ENCODE measurements at regions of chr11 and their contacts with region 1.

Region 1: DNA sequence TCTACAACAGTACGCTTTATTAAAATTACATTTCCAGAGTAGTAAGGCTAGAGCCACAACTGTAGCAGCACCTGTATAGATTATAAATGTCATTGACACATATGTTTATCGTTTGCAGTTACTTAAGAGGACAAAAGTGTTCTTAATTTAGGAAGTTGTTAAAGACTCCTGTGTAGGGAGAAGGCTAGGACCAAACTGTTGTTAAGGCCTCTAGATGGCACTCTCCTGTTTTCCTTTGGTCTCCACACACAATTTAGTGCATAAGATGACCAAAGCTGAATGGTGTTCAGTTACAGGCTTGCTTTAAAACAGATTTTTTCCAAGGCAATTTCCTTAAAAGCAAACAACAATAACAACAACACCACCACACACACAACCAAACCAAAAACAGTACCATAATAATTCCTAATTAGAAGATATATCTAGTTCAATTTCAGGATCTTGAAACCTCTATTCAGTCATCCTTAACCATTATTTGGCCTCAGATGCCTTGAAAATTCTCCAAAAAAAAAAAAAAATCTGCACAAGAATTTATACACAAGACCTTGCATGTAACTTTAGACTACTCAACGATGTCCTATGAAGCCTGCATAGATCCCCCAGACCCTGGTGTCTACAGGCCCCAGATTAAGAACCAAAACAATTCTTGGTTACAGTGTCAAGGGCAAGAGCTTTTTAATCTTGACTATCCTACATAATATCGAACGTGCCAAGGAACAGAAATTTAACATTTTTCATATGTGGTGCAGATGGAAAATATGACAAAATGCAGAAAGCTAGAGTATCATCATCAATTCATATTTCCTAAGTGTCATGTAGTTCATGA is 42.6 kb upstream of the APOA1 start:
- DNase-seq: peak; percentile 39 to 70 (median 60)
- H3K4me3 ChIP-seq: no peak overlapping the region
- H3K4me3 Mint-ChIP-seq: no peak overlapping the region
- H3K27ac ChIP-seq: peak overlapping the region in 1 of 2 donors; percentile 24
- H3K27ac Mint-ChIP-seq: peak overlapping the region in 5 of 7 donors; percentile 2 to 66 (median 32)
- H3K4me1 ChIP-seq: no peaks in the 10 kb centered on the region
- H3K4me1 Mint-ChIP-seq: peaks cover 5% of the 10 kb centered on the region
- H3K27me3 ChIP-seq: no peaks in the 10 kb centered on the region
- H3K27me3 Mint-ChIP-seq: no peaks in the 10 kb centered on the region
- CTCF ChIP-seq: peak; percentile 68

Region 2: GRCh38 chr11:117107701-117108590 is 227.9 kb after region 1 on chr11:
- intact Hi-C with region 1: loop called (anchors 1 to 2 kb)
- DNase-seq: no peak
- H3K4me3 ChIP-seq: no peak overlapping the region
- H3K4me3 Mint-ChIP-seq: no peak overlapping the region
- H3K27ac ChIP-seq: no peak overlapping the region
- H3K27ac Mint-ChIP-seq: no peak overlapping the region
- H3K4me1 ChIP-seq: no peaks in the 10 kb centered on the region
- H3K4me1 Mint-ChIP-seq: no peaks in the 10 kb centered on the region
- H3K27me3 ChIP-seq: no peaks in the 10 kb centered on the region
- H3K27me3 Mint-ChIP-seq: peaks cover 0 to 2% (median 2%) of the 10 kb centered on the region in 3 donors
- CTCF ChIP-seq: no peak

Region 3: DNA sequence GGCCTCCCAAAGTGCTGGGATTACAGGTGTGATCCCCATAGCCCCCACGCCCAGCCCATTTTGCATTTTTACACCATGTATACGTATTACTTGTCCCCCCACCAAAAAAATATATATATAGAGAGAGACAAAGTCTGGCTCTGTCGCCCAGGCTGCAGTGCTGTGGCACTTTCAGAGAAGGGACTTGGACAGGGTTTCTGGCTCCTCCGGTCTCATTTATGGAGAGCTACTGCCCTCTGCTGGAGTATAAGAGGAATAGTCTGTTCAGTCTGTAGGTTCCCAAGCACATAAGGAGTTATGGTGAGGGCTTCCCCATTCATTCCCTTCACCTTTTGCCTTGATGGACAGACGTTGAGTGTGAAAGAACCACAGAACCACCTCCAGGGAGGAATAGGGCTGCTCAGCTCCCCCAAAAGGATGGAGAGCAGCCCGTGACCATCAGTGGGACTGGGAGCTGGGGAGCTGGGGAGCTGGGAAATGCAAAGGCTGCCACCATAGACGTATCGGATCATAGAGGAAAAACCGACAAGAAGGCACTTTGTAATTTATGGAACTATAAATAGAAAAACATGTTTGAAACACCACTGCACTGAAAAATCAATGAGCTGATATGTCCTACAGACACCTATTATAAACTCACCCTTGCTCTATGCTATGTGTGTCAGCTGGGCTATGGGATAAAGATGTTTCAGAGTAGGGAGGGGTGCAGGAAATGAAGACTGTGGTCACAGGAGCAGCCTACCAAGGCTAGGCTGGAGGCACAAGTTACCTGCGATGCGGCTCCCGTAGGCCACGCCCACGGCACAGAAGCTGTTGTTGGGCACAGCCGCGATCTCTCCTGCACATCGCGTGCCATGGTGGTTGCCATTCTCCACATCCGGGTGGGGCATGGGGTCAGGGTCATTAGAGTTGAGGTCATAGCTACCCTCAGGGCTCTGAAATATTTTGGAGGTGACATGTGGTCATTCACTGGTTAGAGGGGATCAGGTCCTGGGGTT is 346.7 kb after region 1 on chr11:
- intact Hi-C with region 1: loop called (anchors 10 kb)
- DNase-seq: peak; percentile 67 to 79 (median 74)
- H3K4me3 ChIP-seq: no peak overlapping the region
- H3K4me3 Mint-ChIP-seq: peak overlapping the region in 1 of 2 donors; percentile 34
- H3K27ac ChIP-seq: no peak overlapping the region
- H3K27ac Mint-ChIP-seq: peak overlapping the region in 4 of 7 donors; percentile 12 to 71 (median 40)
- H3K4me1 ChIP-seq: peaks cover 14 to 17% of the 10 kb centered on the region in 2 donors
- H3K4me1 Mint-ChIP-seq: peaks cover 20% of the 10 kb centered on the region
- H3K27me3 ChIP-seq: no peaks in the 10 kb centered on the region
- H3K27me3 Mint-ChIP-seq: no peaks in the 10 kb centered on the region
- CTCF ChIP-seq: peak; percentile 78

Measured in CD14-positive monocyte (primary cell).